GM23248 (cell line): ENCODE measurements at regions of chr11 and their contacts with region 1.

Region 1: DNA sequence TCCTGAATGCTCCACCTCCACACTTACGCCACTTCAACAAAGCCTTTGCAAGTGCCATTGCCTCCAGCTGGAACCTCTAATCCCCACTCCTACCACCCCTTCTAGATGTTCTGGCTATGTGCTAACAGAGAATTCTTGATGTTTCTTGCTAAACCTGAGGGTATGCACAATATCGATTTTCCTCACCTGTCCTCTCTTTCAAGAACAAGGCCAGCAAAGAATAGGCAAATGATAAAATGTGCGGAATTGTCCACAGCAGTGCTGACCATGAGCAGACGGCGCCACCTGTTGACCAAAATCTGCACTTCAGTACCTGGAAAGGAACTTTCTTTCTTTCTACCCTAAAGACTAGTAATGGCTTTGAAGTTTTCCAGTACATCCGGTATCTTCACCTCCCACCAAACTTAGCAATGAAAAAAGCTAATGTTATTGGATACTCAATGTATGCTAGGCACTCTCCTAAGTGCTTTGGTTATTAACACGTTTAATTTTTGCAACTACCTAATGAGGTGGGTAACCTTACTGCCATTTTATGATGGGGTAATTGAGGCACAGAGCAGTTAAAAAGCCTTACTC is 3.4 kb downstream of the TIMM10 start:
- DNase-seq: peak; percentile 66
- H3K4me3 ChIP-seq: no peak overlapping the region
- H3K27ac ChIP-seq: no peak overlapping the region
- H3K4me1 ChIP-seq: 0 out of 2 replicates have a peak, but pooled peaks cover 5% of the 10 kb centered on the region
- H3K27me3 ChIP-seq: no peaks in the 10 kb centered on the region

Region 2: DNA sequence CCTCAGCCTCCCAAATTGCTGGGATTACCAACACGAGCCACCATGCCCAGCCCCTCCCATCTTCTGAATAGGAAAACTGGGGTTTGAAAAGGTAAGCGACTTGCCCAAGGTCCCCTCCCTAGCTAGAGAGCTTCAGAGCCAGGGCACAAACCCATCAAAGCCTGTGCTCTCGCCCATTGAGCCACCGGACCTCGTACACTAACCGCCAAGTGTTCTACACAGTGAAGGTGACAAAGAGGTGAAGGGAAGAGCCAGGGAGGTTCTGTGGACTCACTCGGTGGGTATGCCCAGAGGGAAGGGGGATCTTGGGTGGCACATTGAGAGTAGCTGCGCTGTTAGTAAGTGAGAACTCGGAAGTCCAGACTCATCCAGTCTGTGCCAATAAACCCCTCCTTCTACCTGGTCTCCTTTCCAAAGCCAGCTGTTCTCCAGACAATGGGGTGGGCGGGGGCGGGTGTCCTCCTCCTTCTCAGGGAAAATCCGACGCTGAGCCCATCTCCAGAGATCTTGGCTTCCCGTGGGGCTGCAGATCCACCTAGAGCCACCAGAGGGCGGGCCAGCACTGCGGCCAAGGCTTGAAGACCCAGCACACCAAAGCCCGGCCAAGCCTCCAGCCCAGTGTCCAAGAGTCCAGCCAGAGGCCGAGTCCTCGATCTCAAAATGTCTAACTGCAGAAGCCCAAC is 70.0 kb before region 1 on chr11:
- in situ Hi-C with region 1: loop called (anchors 10 kb)
- DNase-seq: peak; percentile 88
- H3K4me3 ChIP-seq: no peak overlapping the region
- H3K27ac ChIP-seq: no peak overlapping the region
- H3K4me1 ChIP-seq: no peaks in the 10 kb centered on the region; the same call in 1 of the 2 replicates
- H3K27me3 ChIP-seq: peaks cover 10% of the 10 kb centered on the region

Region 3: DNA sequence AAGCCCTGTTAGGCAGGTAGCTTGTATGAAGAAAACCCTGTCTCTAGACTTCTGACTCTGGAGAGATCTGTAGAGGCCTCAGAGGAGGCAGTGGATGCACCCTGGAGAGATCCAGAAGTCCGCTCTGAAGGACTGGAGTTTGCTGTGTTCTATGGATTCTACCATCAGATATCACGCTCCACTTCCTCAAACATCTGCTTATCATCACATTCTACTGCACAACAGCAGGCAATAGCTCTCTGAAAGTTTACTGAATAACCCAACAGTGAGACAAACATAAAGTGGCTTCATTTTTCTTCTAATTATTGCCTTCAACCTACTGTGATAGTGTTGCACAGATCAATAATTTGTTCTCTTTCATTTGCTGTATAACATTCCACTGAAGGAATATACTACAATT is 437.5 kb after region 1 on chr11:
- in situ Hi-C with region 1: no loop called
- DNase-seq: no peak
- H3K4me3 ChIP-seq: no peak overlapping the region
- H3K27ac ChIP-seq: no peak overlapping the region
- H3K4me1 ChIP-seq: no peaks in the 10 kb centered on the region
- H3K27me3 ChIP-seq: peaks cover 21% of the 10 kb centered on the region